ENCODE measurements at regions of chr9 and their contacts with region 1.

Region 1: GRCh38 chr9:69223605-69224004 is 49.5 kb downstream of the TJP2 start:
- DNase-seq: peak; percentile 64 to 71
- ATAC-seq: peak; percentile 100
- H3K4me3 ChIP-seq: no peak overlapping the region
- H3K27ac ChIP-seq: no peak overlapping the region
- H3K4me1 ChIP-seq: no peaks in the 10 kb centered on the region
- CTCF ChIP-seq: peak; percentile 48
- EP300 ChIP-seq: no peak
- POLR2A ChIP-seq: no peak
- RAD21 ChIP-seq: peak; percentile 16 to 39; a peak in 3 of 5 replicates

Region 2: GRCh38 chr9:68817079-68817875 is 406.3 kb before region 1 on chr9:
- CTCF ChIA-PET with region 1: no interaction called
- POLR2A ChIA-PET with region 1: no interaction called
- DNase-seq: no peak
- ATAC-seq: no peak
- H3K4me3 ChIP-seq: no peak overlapping the region
- H3K27ac ChIP-seq: no peak overlapping the region
- H3K4me1 ChIP-seq: no peaks in the 10 kb centered on the region
- CTCF ChIP-seq: no peak
- EP300 ChIP-seq: no peak
- POLR2A ChIP-seq: no peak
- RAD21 ChIP-seq: no peak

Region 3: DNA sequence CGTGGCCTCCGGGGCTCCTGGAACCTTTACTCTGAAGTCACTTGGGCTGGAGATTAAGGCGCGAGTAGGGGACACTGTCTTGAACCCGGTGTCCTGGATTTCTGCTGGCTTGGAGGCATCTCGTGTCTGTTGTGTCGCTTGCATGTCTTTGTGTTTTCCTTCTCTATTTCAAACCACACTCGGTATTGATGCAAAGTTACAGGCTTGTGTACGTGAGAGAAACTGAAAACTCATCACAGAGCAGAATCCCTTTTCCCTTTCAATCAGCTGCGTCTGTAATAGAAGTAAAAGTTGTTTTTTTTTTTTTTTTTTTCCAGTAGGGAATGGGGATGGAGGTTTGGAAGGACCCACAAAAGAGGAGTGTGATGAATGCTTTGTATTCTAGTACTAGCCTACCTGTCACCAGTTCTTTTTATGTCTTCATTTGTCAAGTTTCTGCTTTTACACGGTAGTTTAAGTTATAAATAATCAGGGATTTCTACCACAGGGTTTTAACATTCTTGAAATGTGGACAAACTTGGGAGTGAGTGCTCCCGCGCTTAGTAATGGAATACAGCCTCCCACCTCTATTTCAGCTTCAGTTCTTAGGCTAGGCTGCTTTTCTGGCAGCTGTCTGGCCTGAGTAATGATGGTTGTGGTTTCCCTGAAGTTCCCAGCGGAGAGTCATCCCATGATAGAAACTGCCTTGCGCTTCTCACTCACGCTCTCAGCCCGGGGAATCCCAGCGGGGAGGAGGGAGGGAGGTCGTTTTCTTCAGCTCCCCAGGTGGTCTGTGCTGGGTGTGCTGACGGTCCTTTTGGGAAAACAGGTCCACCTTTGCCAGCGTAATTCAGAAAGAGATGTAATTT is 48.8 kb before region 1 on chr9:
- CTCF ChIA-PET with region 1: no interaction called
- POLR2A ChIA-PET with region 1: no interaction called
- DNase-seq: no peak
- ATAC-seq: peak in 1 of 2 experiments; percentile 16; a peak in 1 of 6 replicates
- H3K4me3 ChIP-seq: no peak overlapping the region
- H3K27ac ChIP-seq: no peak overlapping the region
- H3K4me1 ChIP-seq: peaks cover 20% of the 10 kb centered on the region
- CTCF ChIP-seq: no peak
- EP300 ChIP-seq: no peak
- POLR2A ChIP-seq: no peak
- RAD21 ChIP-seq: no peak

Region 4: DNA sequence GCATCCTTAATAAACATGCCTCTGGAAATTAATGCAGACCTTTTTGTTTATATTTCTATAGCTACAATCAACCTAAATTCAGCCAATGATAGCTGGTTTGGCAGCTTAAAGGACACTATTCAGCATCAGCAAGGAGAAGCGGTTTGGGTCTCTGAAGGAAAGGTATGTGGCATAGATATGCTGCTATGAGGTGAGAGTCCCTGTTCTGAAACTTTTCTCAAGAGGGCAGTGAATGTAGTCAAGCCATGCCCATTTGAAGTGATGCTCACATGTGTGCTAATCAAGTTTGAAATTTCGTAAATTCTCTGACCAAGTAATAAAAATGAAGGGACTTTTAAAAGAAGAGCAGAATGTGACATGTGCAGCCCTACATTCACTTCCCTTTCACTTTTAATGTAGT is 23.0 kb after region 1 on chr9:
- CTCF ChIA-PET with region 1: interaction called, 10 read pairs
- POLR2A ChIA-PET with region 1: no interaction called
- DNase-seq: no peak
- ATAC-seq: no peak
- H3K4me3 ChIP-seq: no peak overlapping the region
- H3K27ac ChIP-seq: no peak overlapping the region
- H3K4me1 ChIP-seq: no peaks in the 10 kb centered on the region
- CTCF ChIP-seq: no peak
- EP300 ChIP-seq: no peak
- POLR2A ChIP-seq: no peak
- RAD21 ChIP-seq: no peak

Region 5: GRCh38 chr9:69273161-69273560 is 49.6 kb after region 1 on chr9:
- CTCF ChIA-PET with region 1: no interaction called
- POLR2A ChIA-PET with region 1: no interaction called
- DNase-seq: no peak
- ATAC-seq: no peak
- H3K4me3 ChIP-seq: no peak overlapping the region
- H3K27ac ChIP-seq: no peak overlapping the region
- H3K4me1 ChIP-seq: no peaks in the 10 kb centered on the region
- CTCF ChIP-seq: no peak
- EP300 ChIP-seq: no peak
- POLR2A ChIP-seq: no peak
- RAD21 ChIP-seq: no peak